Ascending aorta (tissue), 2 donors: ENCODE measurements at regions of chr1 and their contacts with region 1.

Region 1: DNA sequence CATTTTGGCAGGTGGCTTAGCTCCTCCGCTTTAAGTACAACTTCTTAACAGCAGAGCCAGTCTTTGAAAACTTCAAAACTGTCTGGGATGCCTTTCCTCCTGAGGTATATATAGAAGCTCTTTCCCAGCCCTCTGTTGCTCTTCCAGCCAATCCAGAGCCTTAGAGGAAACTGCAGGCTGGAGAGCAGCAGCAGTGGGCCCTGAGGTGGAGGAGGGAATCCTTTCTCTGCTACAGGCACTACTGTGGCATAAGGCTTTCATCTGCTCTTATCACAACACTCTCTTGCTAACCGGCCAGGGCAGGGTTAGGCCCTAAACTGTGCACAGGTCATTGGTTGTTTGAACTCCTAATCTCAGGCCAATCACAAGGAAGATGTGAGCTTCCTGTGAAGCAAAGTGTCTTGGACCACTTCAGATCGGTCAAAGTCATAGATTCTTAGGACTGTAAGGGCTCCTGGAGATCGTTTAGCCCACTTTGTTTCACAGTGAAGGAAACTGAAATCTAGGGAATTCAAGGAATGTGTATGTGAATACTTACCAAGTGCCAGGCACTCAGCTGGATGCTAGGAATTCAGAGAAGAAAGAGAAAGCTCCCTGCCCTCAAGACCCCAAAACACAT is at the start of gene RGS5:
- DNase-seq: peak in 1 of 2 donors; percentile 79
- H3K4me3 ChIP-seq: peak within 1 kb of the TSS; percentile 51 to 77
- H3K27ac ChIP-seq: peak within 1 kb of the TSS; percentile 75 to 83
- H3K4me1 ChIP-seq: peaks cover 0 to 6% of the 10 kb centered on the region in 2 donors
- H3K27me3 ChIP-seq: no peaks in the 10 kb centered on the region
- CTCF ChIP-seq: no peak
- total RNA-seq, gene RGS5: 732 TPM

Region 2: GRCh38 chr1:163263818-163264217 is 60.9 kb after region 1 on chr1:
- intact Hi-C with region 1: loop called (anchors 5 kb)
- DNase-seq: no peak
- H3K4me3 ChIP-seq: no peak overlapping the region
- H3K27ac ChIP-seq: no peak overlapping the region
- H3K4me1 ChIP-seq: peaks cover under 1 to 10% of the 10 kb centered on the region in 2 donors
- H3K27me3 ChIP-seq: no peaks in the 10 kb centered on the region
- CTCF ChIP-seq: no peak